ENCODE measurements at regions of chr3 and their contacts with region 1.

Region 1: DNA sequence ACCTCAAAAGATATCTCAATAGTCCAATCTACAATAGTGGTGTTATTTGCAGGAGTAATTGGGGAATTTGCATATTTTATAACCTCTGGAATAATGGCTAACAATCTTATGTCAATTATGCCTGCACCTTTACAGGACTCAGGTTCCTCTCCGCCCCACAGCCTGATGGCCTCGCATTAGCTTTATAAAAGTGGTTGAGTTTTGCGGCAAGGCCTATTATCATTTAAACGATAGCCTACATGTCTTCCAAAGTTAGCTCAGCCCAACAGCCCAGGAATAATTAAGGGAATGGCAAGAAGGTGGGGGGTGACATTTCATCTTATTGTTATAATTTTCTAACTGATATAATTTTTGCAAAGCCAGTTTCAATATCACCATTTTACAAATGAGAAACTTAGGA is 97.3 kb downstream of the RTP4 start:
- DNase-seq: no peak
- H3K4me3 Mint-ChIP-seq: no peak overlapping the region
- H3K27ac Mint-ChIP-seq: no peak overlapping the region
- H3K4me1 Mint-ChIP-seq: no peaks in the 10 kb centered on the region
- H3K27me3 Mint-ChIP-seq: peaks cover 2% of the 10 kb centered on the region

Region 2: DNA sequence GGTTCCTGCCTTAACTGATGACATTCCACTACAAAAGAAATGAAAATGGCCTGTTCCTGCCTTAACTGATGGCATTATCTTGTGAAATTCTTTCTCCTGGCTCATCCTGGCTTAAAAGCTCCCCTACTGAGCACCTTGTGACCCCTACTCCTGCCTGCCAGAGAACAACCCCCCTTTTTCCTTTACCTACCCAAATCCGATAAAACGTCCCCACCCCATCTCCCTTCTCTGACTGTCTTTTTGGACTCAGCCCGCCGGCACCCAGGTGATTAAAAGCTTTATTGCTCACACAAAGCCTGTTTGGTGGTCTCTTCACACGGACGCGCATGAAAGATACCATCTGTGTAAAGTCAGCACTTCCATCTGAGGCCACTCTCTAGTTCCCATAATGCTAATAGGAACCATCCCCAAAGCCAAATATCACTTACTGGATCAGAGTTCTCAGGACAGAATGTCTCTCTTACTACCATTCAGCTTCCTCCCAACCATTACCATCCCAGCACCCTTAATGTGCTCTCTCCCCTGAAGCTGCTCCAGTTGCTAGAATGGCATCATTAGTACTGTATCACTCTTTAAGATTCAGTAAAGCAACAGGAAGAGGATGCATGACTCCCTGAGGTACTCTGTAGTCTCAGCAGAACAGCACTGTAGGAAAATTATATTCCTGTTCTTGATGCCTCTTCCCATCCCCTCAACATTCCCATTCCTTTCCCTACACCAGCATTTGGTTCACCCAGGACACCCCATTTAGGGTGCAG is 802.0 kb before region 1 on chr3:
- intact Hi-C with region 1: loop called (anchors 5 kb)
- DNase-seq: no peak
- H3K4me3 Mint-ChIP-seq: no peak overlapping the region
- H3K27ac Mint-ChIP-seq: no peak overlapping the region
- H3K4me1 Mint-ChIP-seq: peaks cover 5% of the 10 kb centered on the region
- H3K27me3 Mint-ChIP-seq: peaks cover 8% of the 10 kb centered on the region

Region 3: GRCh38 chr3:187484547-187485295 is 19.2 kb after region 1 on chr3:
- intact Hi-C with region 1: no loop called
- DNase-seq: no peak
- H3K4me3 Mint-ChIP-seq: no peak overlapping the region
- H3K27ac Mint-ChIP-seq: no peak overlapping the region
- H3K4me1 Mint-ChIP-seq: no peaks in the 10 kb centered on the region
- H3K27me3 Mint-ChIP-seq: peaks cover 6% of the 10 kb centered on the region

Measured in activated T-helper 1 cell treated with anti-CD3 and anti-CD28 coated beads, Interleukin-12 subunit alpha, Interleukin-12 subunit beta, Interleukin-2, Interleukin-4 antibody, amounts not matched to agents 30 ng/mL and 10 ng/mL and 1 ng/mL, durations not matched to agents 14 hours and 24 hours and 36 hours (primary cell).